Naive thymus-derived CD4-positive, alpha-beta T cell (primary cell): ENCODE measurements at regions of chr6 and their contacts with region 1.

Region 1: DNA sequence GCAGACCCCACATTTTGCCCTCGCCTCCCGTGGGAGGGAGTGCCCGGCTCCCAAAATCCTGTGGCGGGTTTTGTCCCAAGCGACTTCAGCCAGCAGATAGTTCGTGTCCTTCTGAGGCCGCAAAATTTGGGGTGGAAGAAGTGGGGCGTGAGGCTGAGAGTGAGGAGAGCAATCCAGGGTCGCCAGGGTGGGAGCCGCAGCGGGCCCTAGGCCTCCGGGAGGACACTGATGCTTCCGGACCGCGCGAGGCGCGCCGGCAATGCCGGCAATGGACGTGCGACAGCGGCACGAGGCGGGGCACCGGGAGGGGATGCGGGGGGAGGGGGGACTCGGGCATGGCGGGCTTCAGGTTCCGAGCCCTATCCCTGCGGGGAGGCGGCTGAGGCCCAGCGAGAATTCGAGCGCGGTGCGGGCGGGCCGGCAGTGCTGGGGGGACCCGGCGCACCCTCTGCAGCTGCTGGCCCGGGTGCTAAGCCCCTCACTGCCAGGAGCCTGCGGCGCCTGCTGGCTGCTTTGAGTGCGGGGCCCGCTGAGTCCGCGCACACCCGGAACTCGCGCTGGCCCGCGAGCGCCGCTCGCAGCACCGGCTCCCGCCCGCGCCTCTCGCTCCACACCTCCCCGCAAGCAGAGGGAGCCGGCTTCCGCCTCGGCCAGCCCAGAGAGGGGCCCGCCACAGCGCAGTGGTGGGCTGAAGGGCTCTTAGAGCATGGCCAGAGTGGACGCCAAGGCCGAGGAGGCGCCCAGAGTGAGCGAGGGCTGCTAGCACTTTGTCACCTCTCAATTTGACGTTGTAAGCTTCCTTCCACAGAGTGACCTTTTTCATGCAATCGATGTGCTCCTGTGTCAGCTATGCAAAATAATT is 143.8 kb downstream of the LPA start:
- DNase-seq: peak; percentile 47 to 81 (median 69)
- ATAC-seq: peak; percentile 82
- H3K4me3 ChIP-seq: peak overlapping the region; percentile 75
- H3K4me3 Mint-ChIP-seq: peak overlapping the region; percentile 91 to 97 (median 95)
- H3K27ac ChIP-seq: peak overlapping the region; percentile 70
- H3K27ac Mint-ChIP-seq: peak overlapping the region; percentile 81 to 96 (median 87)
- H3K4me1 ChIP-seq: peaks cover 0 to 14% of the 10 kb centered on the region in 2 donors
- H3K4me1 Mint-ChIP-seq: peaks cover 13 to 32% (median 24%) of the 10 kb centered on the region in 7 donors
- H3K27me3 ChIP-seq: no peaks in the 10 kb centered on the region
- H3K27me3 Mint-ChIP-seq: peaks cover 0 to 59% (median 0%) of the 10 kb centered on the region in 5 donors

Region 2: DNA sequence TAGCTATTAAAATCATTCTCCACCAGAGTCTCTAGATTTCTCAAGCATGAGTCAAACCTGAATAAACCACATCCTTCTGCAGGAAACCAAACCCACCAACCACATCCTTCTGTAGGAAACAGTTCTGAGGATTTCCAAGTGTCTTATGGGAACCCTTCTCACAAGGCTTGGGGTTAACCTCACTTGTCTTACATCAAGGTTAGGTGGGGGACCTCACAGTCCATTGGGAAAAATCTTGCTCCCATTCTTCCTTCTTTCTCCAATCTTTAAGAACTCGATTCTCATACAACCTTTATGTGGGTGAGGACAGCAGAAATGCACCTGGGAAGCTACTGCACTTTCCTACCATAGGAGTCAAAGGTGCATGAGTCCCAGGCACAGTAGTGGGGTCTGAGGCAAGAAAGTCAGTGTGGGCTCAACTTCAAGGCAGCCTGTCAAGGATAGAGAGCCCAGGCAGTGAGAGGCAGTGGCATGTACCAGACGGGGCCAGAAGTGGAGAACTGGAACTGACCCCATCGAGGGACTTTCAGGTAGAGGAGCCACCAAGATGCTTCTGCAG is 57.6 kb before region 1 on chr6:
- CTCF ChIA-PET with region 1: interaction called, 5 read pairs
- POLR2A ChIA-PET with region 1: no interaction called
- intact Hi-C with region 1: loop called (anchors 1 kb)
- DNase-seq: peak in 8 of 9 donors; percentile 69 to 93 (median 90)
- ATAC-seq: peak; percentile 95
- H3K4me3 ChIP-seq: peak overlapping the region; percentile 47
- H3K4me3 Mint-ChIP-seq: peak overlapping the region; percentile 60 to 89 (median 72)
- H3K27ac ChIP-seq: no peak overlapping the region
- H3K27ac Mint-ChIP-seq: peak overlapping the region; percentile 53 to 98 (median 88)
- H3K4me1 ChIP-seq: peaks cover 50 to 56% of the 10 kb centered on the region in 2 donors
- H3K4me1 Mint-ChIP-seq: peaks cover 33 to 81% (median 71%) of the 10 kb centered on the region in 7 donors
- H3K27me3 ChIP-seq: no peaks in the 10 kb centered on the region
- H3K27me3 Mint-ChIP-seq: peaks cover 0 to 52% (median 10%) of the 10 kb centered on the region in 5 donors

Region 3: GRCh38 chr6:160534050-160534696 is 13.9 kb after region 1 on chr6:
- CTCF ChIA-PET with region 1: interaction called, 73 read pairs
- POLR2A ChIA-PET with region 1: interaction called, 3 read pairs
- intact Hi-C with region 1: loop called (anchors 1 kb)
- DNase-seq: peak; percentile 2 to 55 (median 37)
- ATAC-seq: peak; percentile 86
- H3K4me3 ChIP-seq: no peak overlapping the region
- H3K4me3 Mint-ChIP-seq: no peak overlapping the region
- H3K27ac ChIP-seq: no peak overlapping the region
- H3K27ac Mint-ChIP-seq: no peak overlapping the region
- H3K4me1 ChIP-seq: no peaks in the 10 kb centered on the region
- H3K4me1 Mint-ChIP-seq: no peaks in the 10 kb centered on the region
- H3K27me3 ChIP-seq: no peaks in the 10 kb centered on the region
- H3K27me3 Mint-ChIP-seq: peaks cover 0 to 18% (median 5%) of the 10 kb centered on the region in 5 donors

Region 4: GRCh38 chr6:160667639-160668481 is 147.6 kb after region 1 on chr6:
- CTCF ChIA-PET with region 1: no interaction called
- POLR2A ChIA-PET with region 1: no interaction called
- intact Hi-C with region 1: loop called in 1 of 2 experiments (anchors 1 kb)
- DNase-seq: peak in 5 of 9 donors; percentile 1 to 18 (median 4)
- ATAC-seq: no peak
- H3K4me3 ChIP-seq: no peak overlapping the region
- H3K4me3 Mint-ChIP-seq: no peak overlapping the region
- H3K27ac ChIP-seq: no peak overlapping the region
- H3K27ac Mint-ChIP-seq: no peak overlapping the region
- H3K4me1 ChIP-seq: no peaks in the 10 kb centered on the region
- H3K4me1 Mint-ChIP-seq: no peaks in the 10 kb centered on the region
- H3K27me3 ChIP-seq: no peaks in the 10 kb centered on the region
- H3K27me3 Mint-ChIP-seq: peaks cover 7 to 28% (median 16%) of the 10 kb centered on the region in 5 donors

Region 5: DNA sequence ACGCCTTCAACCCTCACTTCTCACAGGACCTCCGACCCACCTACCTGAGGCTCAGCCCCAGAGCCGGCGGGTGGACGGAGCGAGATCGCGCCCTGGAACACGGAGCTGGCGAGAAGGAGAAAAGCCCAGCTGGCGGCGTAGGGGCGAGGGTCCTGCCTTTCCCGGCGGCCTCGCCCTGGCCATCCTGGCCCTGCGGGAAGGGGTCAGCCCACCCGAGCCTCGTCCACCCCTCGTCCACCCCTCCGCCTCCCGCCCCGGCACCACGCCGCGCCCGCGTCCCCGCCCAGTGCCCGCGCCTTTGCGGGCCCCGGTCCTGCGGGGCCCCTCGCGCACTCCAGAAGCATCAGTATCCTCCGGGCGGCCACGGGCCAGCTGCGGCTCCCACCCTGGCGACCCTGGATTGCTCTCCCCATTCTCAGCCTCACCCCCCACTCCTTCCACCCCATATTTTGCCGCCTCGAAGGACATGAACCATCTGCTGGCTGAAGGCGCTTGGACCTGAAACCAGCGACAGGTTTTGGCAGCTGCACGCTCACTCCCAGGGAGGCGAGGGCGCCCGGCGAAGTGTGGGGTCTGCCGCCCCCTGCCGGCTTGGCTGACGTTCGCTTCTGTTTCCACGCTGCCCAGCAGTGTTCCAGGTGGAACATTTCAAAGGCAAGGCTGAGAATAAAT is 246.9 kb after region 1 on chr6:
- CTCF ChIA-PET with region 1: no interaction called
- POLR2A ChIA-PET with region 1: no interaction called
- intact Hi-C with region 1: loop called in 1 of 2 experiments (anchors 2 kb)
- DNase-seq: peak in 7 of 9 donors; percentile 8 to 50 (median 13)
- ATAC-seq: peak; percentile 61
- H3K4me3 ChIP-seq: no peak overlapping the region
- H3K4me3 Mint-ChIP-seq: peak overlapping the region; percentile 15 to 83 (median 63)
- H3K27ac ChIP-seq: no peak overlapping the region
- H3K27ac Mint-ChIP-seq: no peak overlapping the region
- H3K4me1 ChIP-seq: no peaks in the 10 kb centered on the region
- H3K4me1 Mint-ChIP-seq: peaks cover 0 to 9% (median 3%) of the 10 kb centered on the region in 7 donors
- H3K27me3 ChIP-seq: peaks cover 0 to 4% of the 10 kb centered on the region in 2 donors
- H3K27me3 Mint-ChIP-seq: peaks cover 25 to 54% (median 47%) of the 10 kb centered on the region in 5 donors

Region 6: DNA sequence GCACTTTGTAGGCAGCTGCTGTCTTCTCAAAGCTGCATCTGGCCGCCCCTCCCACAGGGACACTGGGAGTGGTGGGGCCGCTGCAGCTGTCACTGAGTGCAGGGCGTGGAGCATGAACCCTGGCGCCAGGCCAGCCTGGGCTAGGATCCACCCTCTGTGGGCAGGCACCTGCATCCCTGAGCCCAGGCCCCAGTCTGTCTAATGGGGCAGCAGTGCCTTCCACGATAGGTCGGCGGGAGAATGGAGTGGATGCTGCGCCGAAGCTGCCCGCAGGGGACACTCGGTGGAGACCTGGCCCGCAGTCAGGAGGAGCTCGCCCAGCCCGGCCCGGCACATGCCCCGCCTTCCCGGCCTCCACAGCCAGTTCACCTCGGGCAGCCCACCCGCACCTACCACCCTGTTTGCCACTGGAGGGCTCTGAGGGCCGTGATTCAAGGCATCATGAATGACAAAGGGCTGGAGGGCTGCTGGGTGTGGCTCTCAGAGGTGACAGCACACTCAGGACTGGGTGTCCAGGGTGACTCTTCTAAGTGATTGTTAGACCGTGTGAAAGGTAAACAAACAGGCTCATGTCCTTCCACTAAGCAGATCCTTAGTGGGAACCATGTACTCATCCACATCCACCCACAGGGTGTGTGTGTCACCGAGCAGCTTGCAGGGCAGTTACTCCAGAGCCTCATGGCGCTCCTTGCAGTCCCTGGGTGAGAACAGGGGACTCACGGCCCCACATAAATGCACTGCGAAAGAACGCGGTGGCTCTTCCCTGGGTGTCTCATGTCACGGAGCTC is 619.7 kb after region 1 on chr6:
- CTCF ChIA-PET with region 1: no interaction called
- POLR2A ChIA-PET with region 1: no interaction called
- intact Hi-C with region 1: no loop called
- DNase-seq: no peak
- ATAC-seq: no peak
- H3K4me3 ChIP-seq: no peak overlapping the region
- H3K4me3 Mint-ChIP-seq: no peak overlapping the region
- H3K27ac ChIP-seq: no peak overlapping the region
- H3K27ac Mint-ChIP-seq: no peak overlapping the region
- H3K4me1 ChIP-seq: no peaks in the 10 kb centered on the region
- H3K4me1 Mint-ChIP-seq: peaks cover 0 to 1% (median 0%) of the 10 kb centered on the region in 7 donors
- H3K27me3 ChIP-seq: no peaks in the 10 kb centered on the region
- H3K27me3 Mint-ChIP-seq: no peaks in the 10 kb centered on the region

Region 7: GRCh38 chr6:161273752-161274487 is 753.6 kb after region 1 on chr6 and contains the start of gene AGPAT4:
- CTCF ChIA-PET with region 1: interaction called, 3 read pairs
- POLR2A ChIA-PET with region 1: no interaction called
- intact Hi-C with region 1: loop called in 1 of 2 experiments (anchors 1 kb)
- DNase-seq: peak; percentile 31 to 85 (median 78)
- ATAC-seq: peak; percentile 96
- H3K4me3 ChIP-seq: peak within 1 kb of the TSS; percentile 46
- H3K4me3 Mint-ChIP-seq: peak within 1 kb of the TSS; percentile 82 to 98 (median 94)
- H3K27ac ChIP-seq: peak within 1 kb of the TSS; percentile 66
- H3K27ac Mint-ChIP-seq: peak within 1 kb of the TSS; percentile 87 to 98 (median 94)
- H3K4me1 ChIP-seq: peaks cover 0 to 6% of the 10 kb centered on the region in 2 donors
- H3K4me1 Mint-ChIP-seq: peaks cover 10 to 31% (median 19%) of the 10 kb centered on the region in 7 donors
- H3K27me3 ChIP-seq: no peaks in the 10 kb centered on the region
- H3K27me3 Mint-ChIP-seq: peaks cover 0 to 15% (median 0%) of the 10 kb centered on the region in 5 donors
- total RNA-seq, gene AGPAT4: 2.0 to 16.2 (median 4.4) TPM